IMR-90 (cell line): ENCODE measurements at regions of chr20 and their contacts with region 1.

Region 1: GRCh38 chr20:2470423-2471193 is at the start of gene SNRPB:
- DNase-seq: peak; percentile 99
- ATAC-seq: peak; percentile 91
- H3K4me3 ChIP-seq: peak within 1 kb of the TSS; percentile 76
- H3K27ac ChIP-seq: peak within 1 kb of the TSS; percentile 91
- H3K4me1 ChIP-seq: peaks cover 7% of the 10 kb centered on the region
- H3K27me3 ChIP-seq: no peaks in the 10 kb centered on the region
- CTCF ChIP-seq: no peak
- POLR2A ChIP-seq: peak; percentile 87
- RAD21 ChIP-seq: peak; percentile 6; the same call in 1 of the 2 replicates
- total RNA-seq, gene SNRPB: 103 and 109 TPM in 2 replicates

Region 2: GRCh38 chr20:2643708-2644107 is 173.1 kb after region 1 on chr20:
- CTCF ChIA-PET with region 1: no interaction called
- POLR2A ChIA-PET with region 1: no interaction called
- dilution Hi-C with region 1: no loop called
- in situ Hi-C with region 1: loop called (anchors 10 kb)
- intact Hi-C with region 1: no loop called
- DNase-seq: no peak
- ATAC-seq: no peak
- H3K4me3 ChIP-seq: no peak overlapping the region
- H3K27ac ChIP-seq: no peak overlapping the region
- H3K4me1 ChIP-seq: no peaks in the 10 kb centered on the region
- H3K27me3 ChIP-seq: no peaks in the 10 kb centered on the region
- CTCF ChIP-seq: no peak
- POLR2A ChIP-seq: no peak
- RAD21 ChIP-seq: no peak

Region 3: DNA sequence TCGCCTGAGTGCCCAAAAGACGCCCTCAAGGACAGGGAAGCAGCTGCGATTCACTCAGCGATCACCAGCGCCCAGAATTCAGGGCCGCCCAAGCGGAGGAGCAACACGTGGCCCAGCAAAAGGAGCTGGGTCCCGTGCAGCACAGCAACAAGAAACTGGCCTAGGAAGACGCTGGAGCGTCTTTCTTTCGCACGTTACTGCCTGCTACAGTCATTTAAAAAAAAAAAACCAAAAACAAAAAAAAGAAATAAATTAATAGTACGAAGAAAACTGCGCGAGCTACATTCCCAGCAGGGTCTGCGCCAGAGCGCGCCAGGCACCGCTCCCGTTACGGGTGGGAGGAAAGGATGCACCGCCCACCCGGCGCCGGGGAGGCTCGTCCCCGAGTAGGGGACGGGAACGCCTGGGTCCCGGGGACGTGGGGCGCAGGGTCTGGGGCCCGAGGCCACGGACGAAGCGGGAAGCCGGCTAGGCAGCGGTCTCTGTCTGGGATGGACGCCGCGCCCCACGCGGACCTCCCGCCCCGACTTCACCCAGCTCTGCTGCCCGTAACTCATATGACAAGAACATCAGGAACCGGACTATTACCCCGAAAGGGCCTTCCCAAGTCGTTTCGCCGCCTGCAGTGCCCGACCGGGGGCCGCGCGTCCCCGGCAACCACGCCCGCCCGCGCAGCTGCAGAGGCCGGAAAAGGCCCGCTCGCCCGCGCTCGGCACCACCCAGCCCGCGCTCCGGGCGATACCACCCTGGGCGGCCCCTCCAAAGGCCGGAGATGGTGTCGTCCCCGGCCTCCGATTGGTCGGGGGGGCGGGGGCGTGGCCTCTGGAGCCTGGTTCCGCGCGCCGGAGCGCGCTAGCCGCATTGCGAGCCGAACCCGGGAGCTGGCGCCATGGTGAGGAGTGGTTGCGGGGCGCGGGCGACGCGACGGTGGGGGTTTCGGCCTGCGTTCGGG is 181.4 kb after region 1 on chr20 and contains the start of gene NOP56:
- CTCF ChIA-PET with region 1: no interaction called
- POLR2A ChIA-PET with region 1: no interaction called
- dilution Hi-C with region 1: no loop called
- in situ Hi-C with region 1: loop called (anchors 10 kb)
- intact Hi-C with region 1: loop called (anchors 2 kb)
- DNase-seq: peak; percentile 86
- ATAC-seq: peak; percentile 96
- H3K4me3 ChIP-seq: peak within 1 kb of the TSS; percentile 90
- H3K27ac ChIP-seq: peak within 1 kb of the TSS; percentile 86
- H3K4me1 ChIP-seq: peaks cover 5% of the 10 kb centered on the region
- H3K27me3 ChIP-seq: no peaks in the 10 kb centered on the region
- CTCF ChIP-seq: no peak
- POLR2A ChIP-seq: peak; percentile 96
- RAD21 ChIP-seq: no peak
- total RNA-seq, gene NOP56: 170 and 231 TPM in 2 replicates